B cell (primary cell): ENCODE measurements at regions of chr10 and their contacts with region 1.

Region 1: DNA sequence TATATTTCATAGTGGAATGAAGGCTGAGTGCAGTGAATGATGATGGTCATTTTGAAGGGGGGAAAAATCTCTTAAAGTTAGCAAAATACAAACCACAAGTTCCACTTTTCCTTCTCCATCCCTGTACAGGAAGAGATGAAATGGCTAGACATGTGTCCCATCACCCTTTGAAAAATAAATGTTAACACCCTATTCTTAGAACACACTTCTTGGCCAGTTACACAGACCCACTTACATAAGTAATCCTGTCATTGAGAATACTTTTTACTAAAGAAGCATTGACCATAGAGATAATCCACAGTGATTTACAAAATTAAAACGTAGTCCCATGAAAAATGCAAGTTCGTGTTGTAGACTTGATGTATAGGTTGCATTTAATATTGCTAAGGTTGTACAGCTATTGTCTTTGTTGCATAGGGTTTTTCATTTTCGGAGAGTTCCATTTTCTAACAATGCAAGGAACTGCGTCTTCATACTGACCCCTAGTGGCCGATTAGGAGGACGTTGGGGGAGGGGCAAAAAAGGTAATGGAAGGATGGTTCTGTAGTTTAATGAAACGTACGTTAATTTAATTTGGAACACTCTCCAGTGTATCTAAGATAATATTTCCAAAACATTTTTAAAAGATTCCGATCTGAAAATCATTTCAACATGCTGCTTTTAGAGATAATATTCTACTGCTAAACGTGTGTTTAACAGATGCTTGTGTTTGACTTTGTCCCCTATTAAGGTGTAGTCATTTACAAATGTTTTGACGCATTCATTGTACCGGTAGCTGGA is 60.9 kb downstream of the ARMC3 start:
- DNase-seq: peak; percentile 82
- ATAC-seq: peak; percentile 83
- H3K4me3 ChIP-seq: no peak overlapping the region
- H3K4me3 Mint-ChIP-seq: no peak overlapping the region
- H3K27ac ChIP-seq: no peak overlapping the region
- H3K27ac Mint-ChIP-seq: peak overlapping the region; percentile 22
- H3K4me1 ChIP-seq: no peaks in the 10 kb centered on the region
- H3K4me1 Mint-ChIP-seq: peaks cover 6% of the 10 kb centered on the region
- H3K27me3 ChIP-seq: peaks cover 0 to 3% (median 0%) of the 10 kb centered on the region in 4 experiments
- H3K27me3 Mint-ChIP-seq: peaks cover 16% of the 10 kb centered on the region
- CTCF ChIP-seq: peak; percentile 97

Region 2: GRCh38 chr10:21989453-21990154 is 999.2 kb before region 1 on chr10:
- CTCF ChIA-PET with region 1: interaction called, 112 read pairs
- POLR2A ChIA-PET with region 1: no interaction called
- intact Hi-C with region 1: loop called (anchors 1 kb)
- DNase-seq: peak; percentile 47
- ATAC-seq: peak; percentile 76
- H3K4me3 ChIP-seq: no peak overlapping the region
- H3K4me3 Mint-ChIP-seq: no peak overlapping the region
- H3K27ac ChIP-seq: no peak overlapping the region
- H3K27ac Mint-ChIP-seq: no peak overlapping the region
- H3K4me1 ChIP-seq: no peaks in the 10 kb centered on the region
- H3K4me1 Mint-ChIP-seq: peaks cover 4% of the 10 kb centered on the region
- H3K27me3 ChIP-seq: no peaks in the 10 kb centered on the region
- H3K27me3 Mint-ChIP-seq: no peaks in the 10 kb centered on the region
- CTCF ChIP-seq: peak; percentile 46

Region 3: GRCh38 chr10:22228943-22229801 is 759.6 kb before region 1 on chr10:
- CTCF ChIA-PET with region 1: no interaction called
- POLR2A ChIA-PET with region 1: no interaction called
- intact Hi-C with region 1: loop called (anchors 1 kb)
- DNase-seq: peak; percentile 96
- ATAC-seq: peak; percentile 81
- H3K4me3 ChIP-seq: peak overlapping the region; percentile 68 to 83 (median 81)
- H3K4me3 Mint-ChIP-seq: peak overlapping the region; percentile 90
- H3K27ac ChIP-seq: peak overlapping the region; percentile 66 to 77
- H3K27ac Mint-ChIP-seq: peak overlapping the region; percentile 100
- H3K4me1 ChIP-seq: no peaks in the 10 kb centered on the region
- H3K4me1 Mint-ChIP-seq: peaks cover 14% of the 10 kb centered on the region
- H3K27me3 ChIP-seq: no peaks in the 10 kb centered on the region
- H3K27me3 Mint-ChIP-seq: peaks cover 7% of the 10 kb centered on the region
- CTCF ChIP-seq: no peak

Region 4: DNA sequence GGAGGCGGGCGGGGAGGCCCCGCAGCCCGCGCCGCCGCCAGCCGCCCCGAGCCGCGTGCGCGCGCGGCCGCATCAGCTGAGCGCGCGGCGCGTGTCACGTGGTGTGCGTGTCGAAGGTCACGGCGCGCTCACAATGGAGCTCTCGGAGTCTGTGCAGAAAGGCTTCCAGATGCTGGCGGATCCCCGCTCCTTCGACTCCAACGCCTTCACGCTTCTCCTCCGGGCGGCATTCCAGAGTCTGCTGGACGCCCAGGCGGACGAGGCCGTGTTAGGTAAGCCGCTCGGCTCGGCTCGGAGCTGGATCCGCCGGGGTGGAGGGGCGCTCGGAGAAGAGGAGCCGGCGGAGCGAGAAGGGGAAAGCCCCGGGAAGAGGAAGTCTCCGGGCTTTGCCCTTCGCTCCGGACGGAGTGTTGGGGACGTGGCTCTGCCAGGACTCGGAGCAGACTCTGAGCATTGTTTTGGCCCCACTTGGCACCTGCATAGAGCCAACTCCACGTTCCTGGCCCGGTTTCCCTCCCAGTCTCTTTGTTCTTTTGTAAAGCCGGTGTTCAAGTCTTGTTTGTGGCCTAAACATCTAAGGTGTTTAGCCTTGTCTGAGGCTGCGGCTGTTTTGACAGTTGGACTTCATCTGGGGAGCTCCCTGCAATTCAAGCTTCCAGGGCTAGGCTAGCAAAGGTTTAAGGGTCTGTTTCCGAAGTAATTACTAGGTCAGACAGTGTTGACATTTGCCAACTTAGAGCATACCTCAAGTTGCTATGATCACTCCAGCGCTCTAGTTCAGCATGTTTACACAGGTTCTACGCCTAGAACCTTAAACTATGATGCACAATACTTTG is 672.3 kb before region 1 on chr10 and contains the start of gene COMMD3:
- CTCF ChIA-PET with region 1: no interaction called
- POLR2A ChIA-PET with region 1: no interaction called
- intact Hi-C with region 1: loop called (anchors 2 kb)
- DNase-seq: peak; percentile 95
- ATAC-seq: peak; percentile 56
- H3K4me3 ChIP-seq: peak within 1 kb of the TSS; percentile 65 to 90 (median 84)
- H3K4me3 Mint-ChIP-seq: peak within 1 kb of the TSS; percentile 97
- H3K27ac ChIP-seq: peak within 1 kb of the TSS; percentile 88 to 92
- H3K27ac Mint-ChIP-seq: peak within 1 kb of the TSS; percentile 98
- H3K4me1 ChIP-seq: peaks cover 21 to 34% of the 10 kb centered on the region in 2 donors
- H3K4me1 Mint-ChIP-seq: peaks cover 36% of the 10 kb centered on the region
- H3K27me3 ChIP-seq: no peaks in the 10 kb centered on the region
- H3K27me3 Mint-ChIP-seq: no peaks in the 10 kb centered on the region
- CTCF ChIP-seq: no peak
- total RNA-seq, gene COMMD3: 74.3 and 78.0 TPM in 2 replicates

Region 5: DNA sequence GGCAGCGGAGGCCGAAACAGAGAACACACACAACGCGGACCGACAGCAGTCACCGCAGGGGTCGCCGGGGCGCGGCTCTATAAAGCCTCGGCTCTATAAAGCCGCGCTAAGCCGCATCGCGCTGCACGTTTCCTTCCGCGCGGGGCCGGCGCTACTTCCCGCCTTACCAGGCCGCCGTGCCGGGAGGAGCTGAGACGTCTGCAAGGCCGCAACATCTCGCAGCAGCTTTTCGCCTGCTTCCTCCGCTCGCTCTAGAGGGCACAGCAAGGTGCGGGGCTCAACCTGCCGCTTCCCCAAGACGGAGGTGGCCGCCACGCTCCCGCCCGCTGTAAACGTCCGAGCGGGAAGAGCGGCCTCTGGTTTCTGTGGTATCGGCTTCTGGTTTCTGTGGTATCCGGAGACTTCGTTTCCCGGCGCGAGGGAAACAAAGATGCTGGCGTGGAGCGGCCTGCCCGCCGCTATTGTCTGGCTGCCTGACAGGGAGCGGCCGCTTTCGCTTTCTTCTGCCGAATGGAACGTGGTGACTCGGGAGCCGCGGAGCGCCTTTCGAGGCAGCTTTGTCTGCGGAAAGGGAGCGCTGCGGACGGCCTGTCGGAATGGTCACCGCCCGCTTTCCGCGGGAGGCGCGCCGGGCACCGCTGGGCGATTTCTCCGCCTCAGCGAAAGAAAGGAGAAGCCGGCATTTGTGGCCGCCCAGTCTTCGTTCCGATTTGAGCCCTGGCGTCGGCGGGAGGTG is 551.7 kb before region 1 on chr10:
- CTCF ChIA-PET with region 1: interaction called, 4 read pairs
- POLR2A ChIA-PET with region 1: no interaction called
- intact Hi-C with region 1: loop called (anchors 2 kb)
- DNase-seq: peak; percentile 96
- ATAC-seq: peak; percentile 86
- H3K4me3 ChIP-seq: peak overlapping the region; percentile 65 to 93 (median 86)
- H3K4me3 Mint-ChIP-seq: peak overlapping the region; percentile 98
- H3K27ac ChIP-seq: peak overlapping the region; percentile 96 to 97
- H3K27ac Mint-ChIP-seq: peak overlapping the region; percentile 99
- H3K4me1 ChIP-seq: peaks cover 19 to 24% of the 10 kb centered on the region in 2 donors
- H3K4me1 Mint-ChIP-seq: peaks cover 36% of the 10 kb centered on the region
- H3K27me3 ChIP-seq: no peaks in the 10 kb centered on the region
- H3K27me3 Mint-ChIP-seq: no peaks in the 10 kb centered on the region
- CTCF ChIP-seq: peak; percentile 25

Region 6: GRCh38 chr10:22573820-22574569 is 414.8 kb before region 1 on chr10:
- CTCF ChIA-PET with region 1: interaction called, 76 read pairs
- POLR2A ChIA-PET with region 1: no interaction called
- intact Hi-C with region 1: loop called (anchors 1 kb)
- DNase-seq: peak; percentile 69
- ATAC-seq: peak; percentile 36
- H3K4me3 ChIP-seq: no peak overlapping the region
- H3K4me3 Mint-ChIP-seq: no peak overlapping the region
- H3K27ac ChIP-seq: no peak overlapping the region
- H3K27ac Mint-ChIP-seq: peak overlapping the region; percentile 46
- H3K4me1 ChIP-seq: peaks cover 5 to 7% of the 10 kb centered on the region in 2 donors
- H3K4me1 Mint-ChIP-seq: peaks cover 7% of the 10 kb centered on the region
- H3K27me3 ChIP-seq: no peaks in the 10 kb centered on the region
- H3K27me3 Mint-ChIP-seq: no peaks in the 10 kb centered on the region
- CTCF ChIP-seq: peak; percentile 69

Region 7: DNA sequence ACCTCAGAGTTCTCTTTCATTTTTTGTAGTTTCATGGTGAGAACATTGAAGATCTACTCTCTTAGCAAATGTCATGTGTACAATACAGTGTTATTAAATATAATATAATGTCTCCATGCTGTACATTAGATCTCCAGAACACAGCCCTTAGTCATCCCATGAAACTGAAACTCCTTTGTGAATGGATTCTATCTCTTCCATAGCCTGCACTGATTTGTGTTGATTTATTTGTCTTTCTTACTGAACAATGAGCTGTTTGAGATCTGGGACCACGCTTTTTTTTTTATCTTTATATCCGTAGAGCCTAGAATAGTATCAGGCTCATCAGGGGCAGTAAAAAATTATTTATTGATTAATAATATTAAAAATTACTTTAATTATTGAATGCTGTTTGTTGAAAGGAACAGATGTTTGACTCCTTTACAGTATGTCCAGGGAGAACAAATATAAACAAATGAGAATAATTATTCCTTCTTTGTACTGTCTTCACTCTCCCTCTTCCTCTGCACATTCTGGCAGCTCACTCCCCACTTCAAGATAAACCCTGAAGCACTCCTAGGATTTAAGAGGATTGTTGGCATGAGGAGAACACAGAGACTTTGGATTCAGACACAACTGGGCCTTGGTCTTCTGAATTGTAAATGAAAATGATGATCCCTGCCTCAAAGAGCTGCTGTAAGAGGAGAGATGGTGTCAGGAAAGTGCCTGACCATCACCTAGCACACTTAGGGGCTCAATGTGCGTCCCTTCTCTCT is 25.0 kb after region 1 on chr10:
- CTCF ChIA-PET with region 1: interaction called, 11 read pairs
- POLR2A ChIA-PET with region 1: no interaction called
- intact Hi-C with region 1: no loop called
- DNase-seq: no peak
- ATAC-seq: no peak
- H3K4me3 ChIP-seq: no peak overlapping the region
- H3K4me3 Mint-ChIP-seq: no peak overlapping the region
- H3K27ac ChIP-seq: no peak overlapping the region
- H3K27ac Mint-ChIP-seq: no peak overlapping the region
- H3K4me1 ChIP-seq: peaks cover 3 to 6% of the 10 kb centered on the region in 2 donors
- H3K4me1 Mint-ChIP-seq: peaks cover 9% of the 10 kb centered on the region
- H3K27me3 ChIP-seq: peaks cover 0 to 3% (median under 1%) of the 10 kb centered on the region in 4 experiments
- H3K27me3 Mint-ChIP-seq: peaks cover 6% of the 10 kb centered on the region
- CTCF ChIP-seq: no peak